ENCODE measurements at regions of chr20 and their contacts with region 1.

Region 1: DNA sequence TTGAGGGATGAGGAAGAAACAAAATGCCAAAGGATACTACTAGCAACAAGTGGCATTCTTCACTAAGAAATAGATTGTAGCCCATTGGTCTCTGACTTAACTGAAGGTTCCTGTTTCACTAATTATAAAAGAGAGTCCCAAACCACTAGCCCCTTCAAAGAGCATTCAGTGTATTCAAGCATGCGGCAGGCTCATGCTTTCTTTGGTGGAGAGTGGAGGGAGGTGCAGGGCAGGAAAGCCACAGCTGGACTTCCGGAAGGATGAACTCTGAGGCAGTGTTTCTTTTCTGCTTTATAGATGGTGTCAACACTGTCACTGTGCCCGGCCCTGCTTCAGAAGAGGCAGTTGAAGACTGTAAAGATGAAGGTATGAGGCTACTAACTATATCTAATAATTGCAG is 636.1 kb downstream of the KIF16B start:
- DNase-seq: peak; percentile 63
- ATAC-seq: peak; percentile 89
- H3K4me3 ChIP-seq: peak overlapping the region in 4 of 5 experiments; percentile 23 to 51 (median 40)
- H3K4me3 Mint-ChIP-seq: peak overlapping the region; percentile 77
- H3K27ac ChIP-seq: peak overlapping the region; percentile 28 to 61
- H3K27ac Mint-ChIP-seq: peak overlapping the region; percentile 85
- H3K4me1 ChIP-seq: peaks cover 27 to 42% of the 10 kb centered on the region in 2 donors
- H3K4me1 Mint-ChIP-seq: peaks cover 53% of the 10 kb centered on the region
- H3K27me3 ChIP-seq: no peaks in the 10 kb centered on the region
- H3K27me3 Mint-ChIP-seq: no peaks in the 10 kb centered on the region
- CTCF ChIP-seq: no peak

Region 2: DNA sequence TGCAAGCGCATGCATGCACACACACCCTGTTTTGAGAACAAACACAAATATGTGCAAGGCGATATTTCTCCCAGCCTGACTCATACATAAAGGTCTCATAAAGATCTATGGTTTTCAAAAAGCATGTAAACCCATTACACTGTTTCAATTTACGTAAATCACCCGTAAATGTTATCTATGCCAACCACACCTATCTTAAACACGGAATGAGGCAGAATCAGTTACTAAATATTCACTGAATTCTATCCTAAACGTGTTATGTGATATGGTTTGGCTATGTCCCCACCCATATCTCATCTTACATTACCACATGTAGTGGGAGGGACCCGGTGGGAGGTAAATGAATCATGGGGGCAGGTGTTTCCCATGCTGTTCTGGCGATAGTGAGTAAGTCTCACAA is 14.5 kb after region 1 on chr20:
- CTCF ChIA-PET with region 1: no interaction called
- POLR2A ChIA-PET with region 1: no interaction called
- intact Hi-C with region 1: no loop called
- DNase-seq: no peak
- ATAC-seq: no peak
- H3K4me3 ChIP-seq: no peak overlapping the region
- H3K4me3 Mint-ChIP-seq: no peak overlapping the region
- H3K27ac ChIP-seq: no peak overlapping the region
- H3K27ac Mint-ChIP-seq: no peak overlapping the region
- H3K4me1 ChIP-seq: no peaks in the 10 kb centered on the region
- H3K4me1 Mint-ChIP-seq: peaks cover 15% of the 10 kb centered on the region
- H3K27me3 ChIP-seq: no peaks in the 10 kb centered on the region
- H3K27me3 Mint-ChIP-seq: no peaks in the 10 kb centered on the region
- CTCF ChIP-seq: no peak

Region 3: GRCh38 chr20:15986690-15987089 is 49.5 kb after region 1 on chr20:
- CTCF ChIA-PET with region 1: no interaction called
- POLR2A ChIA-PET with region 1: no interaction called
- intact Hi-C with region 1: loop called (anchors 5 kb)
- DNase-seq: peak; percentile 31
- ATAC-seq: peak; percentile 80
- H3K4me3 ChIP-seq: peak overlapping the region in 3 of 5 experiments; percentile 33 to 65 (median 35)
- H3K4me3 Mint-ChIP-seq: peak overlapping the region; percentile 82
- H3K27ac ChIP-seq: peak overlapping the region; percentile 63 to 73
- H3K27ac Mint-ChIP-seq: peak overlapping the region; percentile 92
- H3K4me1 ChIP-seq: peaks cover 21 to 22% of the 10 kb centered on the region in 2 donors
- H3K4me1 Mint-ChIP-seq: peaks cover 31% of the 10 kb centered on the region
- H3K27me3 ChIP-seq: no peaks in the 10 kb centered on the region
- H3K27me3 Mint-ChIP-seq: no peaks in the 10 kb centered on the region
- CTCF ChIP-seq: no peak

Measured in B cell (primary cell).